Spleen (tissue), 13 donors: ENCODE measurements at regions of chr2 and their contacts with region 1.

Region 1: DNA sequence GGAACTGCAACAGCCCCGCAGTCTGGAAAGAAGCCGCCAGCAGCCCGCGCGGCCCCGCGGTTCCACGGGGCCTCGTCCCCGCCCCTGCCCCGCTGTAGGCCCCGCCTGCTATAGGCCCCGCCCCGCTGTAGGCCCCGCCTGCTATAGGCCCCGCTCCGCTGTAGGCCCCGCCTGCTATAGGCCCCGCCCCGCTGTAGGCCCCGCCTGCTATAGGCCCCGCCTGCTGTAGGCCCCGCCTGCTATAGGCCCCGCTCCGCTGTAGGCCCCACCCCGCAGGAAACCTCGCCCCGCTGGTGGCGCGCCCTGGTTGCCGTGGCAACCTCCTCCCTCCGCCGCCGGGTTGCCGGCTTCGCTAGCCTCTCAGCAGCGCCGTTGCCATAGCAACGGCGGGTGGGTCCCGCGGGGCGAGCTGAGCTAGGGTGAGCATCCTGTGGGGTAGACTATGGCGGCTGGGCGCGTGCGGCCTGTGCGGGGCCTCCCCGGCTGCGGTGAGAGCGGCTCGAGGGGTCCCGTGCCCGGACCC is 12.2 kb upstream of the KIF1A start:
- DNase-seq: peak; percentile 99
- H3K4me3 ChIP-seq: peak overlapping the region in 6 of 8 donors; percentile 12 to 59 (median 26)
- H3K27ac ChIP-seq: no peak overlapping the region
- H3K4me1 ChIP-seq: peaks cover 6 to 19% (median 14%) of the 10 kb centered on the region in 6 donors
- H3K27me3 ChIP-seq: peaks cover 0 to 64% (median 14%) of the 10 kb centered on the region in 7 donors
- CTCF ChIP-seq: no peak
- POLR2A ChIP-seq: no peak

Region 2: DNA sequence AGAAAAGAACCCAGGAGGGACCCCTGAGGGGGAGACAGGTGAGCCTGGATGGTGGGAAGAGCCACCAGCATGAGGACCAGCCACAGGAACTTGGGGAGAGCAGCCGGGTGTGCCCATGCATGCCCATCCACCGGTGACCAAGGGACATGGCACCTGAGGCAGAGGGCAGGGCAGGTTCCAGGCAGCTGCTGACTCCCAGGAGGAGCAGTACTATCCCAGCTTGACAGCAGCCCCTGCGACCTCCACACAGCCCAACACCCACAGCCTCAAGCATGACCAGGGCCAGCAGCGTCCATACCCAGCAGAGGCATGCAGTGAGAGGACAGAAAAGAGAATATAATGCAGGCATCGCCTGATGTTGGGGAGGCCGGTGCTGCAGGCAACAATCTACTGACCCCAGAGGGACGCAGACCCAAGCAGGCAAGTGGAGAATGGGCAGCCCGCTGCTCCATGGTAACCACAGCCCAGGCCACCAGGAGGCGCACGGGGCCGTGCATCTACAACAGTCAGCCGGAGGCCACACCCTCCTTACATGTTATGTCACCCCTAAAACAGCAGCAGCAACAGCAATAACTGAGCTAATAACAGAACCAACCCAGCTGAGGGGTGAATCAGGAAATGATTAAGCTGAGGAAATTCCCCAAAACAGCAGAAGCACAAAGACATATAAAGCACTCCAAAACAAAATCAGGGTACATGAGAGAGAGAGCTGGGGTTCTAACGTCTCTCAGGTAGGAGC is 318.5 kb before region 1 on chr2:
- intact Hi-C with region 1: loop called (anchors 10 kb)
- DNase-seq: peak; percentile 96
- H3K4me3 ChIP-seq: no peak overlapping the region
- H3K27ac ChIP-seq: peak overlapping the region in 2 of 8 donors; percentile 37 to 50
- H3K4me1 ChIP-seq: peaks cover 9 to 16% (median 10%) of the 10 kb centered on the region in 6 donors
- H3K27me3 ChIP-seq: no peaks in the 10 kb centered on the region
- CTCF ChIP-seq: peak; percentile 83 to 95 (median 91)
- POLR2A ChIP-seq: no peak